Heart right ventricle (tissue), 16 donors: ENCODE measurements at regions of chr1 and their contacts with region 1.

Region 1: GRCh38 chr1:45303582-45304310 is 22.9 kb upstream of the HPDL start:
- DNase-seq: peak; percentile 99
- ATAC-seq: peak; percentile 97 to 98 (median 98)
- H3K4me3 ChIP-seq: peak overlapping the region; percentile 36 to 94 (median 82)
- H3K27ac ChIP-seq: peak overlapping the region; percentile 76 to 96 (median 94)
- H3K4me1 ChIP-seq: peaks cover 0 to 17% (median 10%) of the 10 kb centered on the region in 9 donors
- H3K27me3 ChIP-seq: no peaks in the 10 kb centered on the region
- CTCF ChIP-seq: peak in 8 of 9 donors; percentile 42 to 83 (median 72)

Region 2: GRCh38 chr1:44361478-44361877 is 942.3 kb before region 1 on chr1:
- intact Hi-C with region 1: no loop called
- DNase-seq: no peak
- ATAC-seq: no peak
- H3K4me3 ChIP-seq: no peak overlapping the region
- H3K27ac ChIP-seq: no peak overlapping the region
- H3K4me1 ChIP-seq: no peaks in the 10 kb centered on the region
- H3K27me3 ChIP-seq: peaks cover 0 to 8% (median 0%) of the 10 kb centered on the region in 7 donors
- CTCF ChIP-seq: no peak

Region 3: GRCh38 chr1:44714944-44715571 is 588.7 kb before region 1 on chr1:
- intact Hi-C with region 1: loop called in 1 of 10 experiments (anchors 5 kb)
- DNase-seq: peak in 1 of 2 donors; percentile 64
- ATAC-seq: peak; percentile 64 to 84 (median 72)
- H3K4me3 ChIP-seq: no peak overlapping the region
- H3K27ac ChIP-seq: no peak overlapping the region
- H3K4me1 ChIP-seq: peaks cover 0 to 10% (median 6%) of the 10 kb centered on the region in 9 donors
- H3K27me3 ChIP-seq: peaks cover 0 to 6% (median 0%) of the 10 kb centered on the region in 7 donors
- CTCF ChIP-seq: peak; percentile 82 to 97 (median 92)

Region 4: GRCh38 chr1:44739361-44740178 is 564.2 kb before region 1 on chr1 and contains the start of gene KIF2C:
- intact Hi-C with region 1: loop called in 3 of 10 experiments (anchors 5 to 10 kb)
- DNase-seq: peak; percentile 97
- ATAC-seq: peak; percentile 99 to 100 (median 100)
- H3K4me3 ChIP-seq: peak within 1 kb of the TSS; percentile 31 to 64 (median 52)
- H3K27ac ChIP-seq: peak within 1 kb of the TSS; percentile 34 to 91 (median 82)
- H3K4me1 ChIP-seq: peaks cover 0 to 11% (median 8%) of the 10 kb centered on the region in 9 donors
- H3K27me3 ChIP-seq: no peaks in the 10 kb centered on the region
- CTCF ChIP-seq: peak in 3 of 9 donors; percentile 15 to 31 (median 18)
- total RNA-seq, gene KIF2C: 0.73 to 3.7 (median 1.4) TPM

Region 5: DNA sequence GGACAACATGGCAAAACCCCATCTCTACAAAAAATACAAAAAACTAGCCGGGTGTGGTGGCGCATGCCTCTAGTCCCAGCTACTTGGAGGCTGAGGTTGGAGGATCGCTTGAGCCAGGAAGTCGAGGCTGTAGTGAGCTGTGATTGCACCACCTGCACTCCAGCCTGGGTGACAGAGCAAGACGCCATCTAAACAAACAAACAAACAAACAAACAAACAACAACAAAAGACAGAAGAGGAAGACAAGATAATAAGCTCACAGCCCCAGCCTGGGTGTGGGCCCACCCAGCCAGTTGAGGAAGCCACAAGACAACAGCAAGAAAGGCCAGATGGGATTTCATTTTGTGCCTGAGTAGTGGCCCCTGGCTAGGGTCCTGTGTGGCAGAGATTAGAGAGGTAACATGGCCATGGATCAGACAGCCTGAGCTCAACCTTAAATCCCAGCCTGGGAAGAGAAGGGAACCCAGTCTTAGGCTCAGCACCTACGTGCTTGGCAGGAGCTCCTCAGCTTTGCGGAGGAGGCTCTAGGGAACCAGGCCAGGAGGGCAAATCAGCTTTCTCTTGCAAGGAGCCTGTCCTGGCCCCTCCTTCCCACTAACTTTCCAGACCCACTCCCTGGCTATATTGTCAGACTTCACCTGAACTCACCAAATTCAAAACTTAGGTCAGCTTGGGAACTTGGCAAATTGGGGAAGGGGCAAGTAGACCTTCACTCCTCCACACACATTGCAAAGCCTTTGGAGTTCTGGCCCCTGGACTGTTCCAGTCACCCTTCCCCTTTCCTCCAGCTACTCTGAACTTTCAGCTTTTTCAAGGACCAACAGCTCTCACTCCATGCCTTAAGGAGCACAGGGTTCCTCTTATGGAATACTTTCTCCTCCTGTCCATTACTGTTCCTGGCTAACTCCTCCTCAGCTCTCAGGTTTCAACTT is 510.7 kb before region 1 on chr1:
- intact Hi-C with region 1: loop called in 5 of 10 experiments (anchors 5 to 10 kb)
- DNase-seq: no peak
- ATAC-seq: peak in 3 of 8 donors; percentile 9 to 21 (median 14)
- H3K4me3 ChIP-seq: no peak overlapping the region
- H3K27ac ChIP-seq: no peak overlapping the region
- H3K4me1 ChIP-seq: no peaks in the 10 kb centered on the region
- H3K27me3 ChIP-seq: no peaks in the 10 kb centered on the region
- CTCF ChIP-seq: no peak

Region 6: GRCh38 chr1:44819608-44820327 is 484.0 kb before region 1 on chr1:
- intact Hi-C with region 1: loop called in 1 of 10 experiments (anchors 5 kb)
- DNase-seq: peak; percentile 79 to 84
- ATAC-seq: peak; percentile 88 to 95 (median 92)
- H3K4me3 ChIP-seq: peak overlapping the region; percentile 47 to 76 (median 64)
- H3K27ac ChIP-seq: peak overlapping the region; percentile 85 to 99 (median 96)
- H3K4me1 ChIP-seq: peaks cover 7 to 30% (median 12%) of the 10 kb centered on the region in 9 donors
- H3K27me3 ChIP-seq: no peaks in the 10 kb centered on the region
- CTCF ChIP-seq: peak in 3 of 9 donors; percentile 24 to 35 (median 33)

Region 7: DNA sequence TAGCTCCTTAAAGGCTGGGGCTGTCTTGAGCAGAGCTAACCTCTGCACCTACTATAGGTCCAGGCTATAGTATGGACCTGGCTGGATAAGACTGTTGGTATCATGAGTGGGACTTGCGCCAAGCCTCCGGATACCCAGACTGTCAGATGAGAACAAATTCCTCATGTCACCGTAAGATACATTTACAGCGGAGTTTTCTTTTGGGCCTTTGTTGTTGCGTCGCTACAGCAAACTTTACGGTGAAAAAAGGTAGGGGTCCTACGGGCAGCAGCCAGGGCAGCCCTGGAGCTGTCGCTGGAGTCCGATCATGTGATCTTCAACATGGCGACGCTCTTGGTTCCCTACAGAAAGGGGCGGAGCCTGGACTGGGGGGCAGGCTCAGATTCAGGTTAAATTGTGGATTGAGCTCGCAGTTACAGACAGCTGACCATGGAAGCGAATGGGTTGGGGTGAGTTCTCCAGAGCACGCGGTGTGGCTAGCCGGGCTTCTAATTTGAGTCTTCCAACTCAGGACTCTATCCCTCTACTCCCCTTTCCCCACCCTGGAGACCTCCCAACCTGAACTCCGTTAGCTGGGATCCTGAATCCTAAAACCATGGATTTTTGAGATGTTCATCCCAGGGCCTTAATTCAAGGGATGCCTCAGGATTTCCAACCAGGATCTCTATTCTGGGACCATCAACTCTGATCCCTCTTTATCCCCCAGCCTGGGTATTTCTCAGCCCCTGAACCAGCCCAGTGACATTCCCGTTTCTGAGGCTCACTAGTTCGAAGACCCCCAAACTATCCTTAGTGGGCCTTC is 291.7 kb before region 1 on chr1 and contains the start of gene UROD:
- intact Hi-C with region 1: loop called in 9 of 10 experiments (anchors 1 to 2 kb)
- DNase-seq: peak; percentile 88 to 94
- ATAC-seq: peak; percentile 89 to 97 (median 95)
- H3K4me3 ChIP-seq: peak within 1 kb of the TSS; percentile 75 to 100 (median 96)
- H3K27ac ChIP-seq: peak within 1 kb of the TSS in 9 of 10 donors; percentile 59 to 88 (median 82)
- H3K4me1 ChIP-seq: peaks cover 20 to 51% (median 35%) of the 10 kb centered on the region in 9 donors
- H3K27me3 ChIP-seq: no peaks in the 10 kb centered on the region
- CTCF ChIP-seq: no peak
- total RNA-seq, gene UROD: 68.1 to 94.0 (median 83.1) TPM

Region 8: DNA sequence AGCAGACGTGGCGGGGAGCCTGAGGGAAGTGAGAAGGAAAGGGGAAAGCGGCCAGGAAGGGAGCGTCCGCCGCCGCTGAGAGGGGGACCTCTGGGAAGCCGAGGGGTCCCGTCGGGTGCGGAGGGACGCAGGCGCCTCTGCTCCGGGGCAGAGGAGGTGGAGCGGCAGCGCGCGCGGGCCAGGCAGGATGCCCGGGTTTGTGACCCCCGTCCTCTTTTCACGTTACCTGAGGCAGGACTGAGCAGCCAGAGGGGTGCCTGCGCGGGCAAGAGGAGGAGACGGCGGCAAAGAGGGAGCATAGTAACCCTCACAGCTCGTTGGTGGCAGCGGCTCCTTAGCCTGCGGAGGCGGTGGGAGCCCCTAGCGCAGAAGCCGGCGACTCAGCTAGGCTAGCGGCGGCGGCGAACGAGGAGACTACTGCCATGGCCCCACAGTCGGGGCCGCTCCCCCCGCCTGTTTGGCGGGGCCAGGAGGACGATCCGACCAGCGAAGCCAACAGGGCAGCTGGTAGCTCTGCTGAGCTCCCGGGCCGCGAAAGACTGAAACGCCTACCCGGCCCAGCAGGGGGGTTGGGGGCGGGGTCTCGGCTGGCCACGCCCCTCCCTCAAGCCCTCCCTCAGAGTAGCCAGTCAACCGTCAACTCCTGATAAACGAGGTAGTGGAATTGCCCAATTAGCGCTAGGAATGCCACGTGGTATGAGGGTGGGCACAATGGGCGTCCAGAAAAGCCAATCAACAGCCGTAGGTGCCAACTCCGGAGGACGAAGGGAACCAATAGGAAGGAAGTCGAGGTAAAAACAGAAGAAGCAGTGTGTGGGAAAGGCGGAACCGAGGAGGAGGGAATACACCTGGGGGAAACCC is 187.1 kb after region 1 on chr1 and contains the start of gene TESK2:
- intact Hi-C with region 1: loop called in 3 of 10 experiments (anchors 5 kb)
- DNase-seq: peak; percentile 95 to 97
- ATAC-seq: peak; percentile 97 to 99 (median 98)
- H3K4me3 ChIP-seq: peak within 1 kb of the TSS; percentile 62 to 96 (median 86)
- H3K27ac ChIP-seq: peak within 1 kb of the TSS in 9 of 10 donors; percentile 35 to 83 (median 76)
- H3K4me1 ChIP-seq: peaks cover 0 to 29% (median 10%) of the 10 kb centered on the region in 9 donors
- H3K27me3 ChIP-seq: no peaks in the 10 kb centered on the region
- CTCF ChIP-seq: peak in 4 of 9 donors; percentile 8 to 29 (median 19)
- total RNA-seq, gene TESK2: 0.77 to 2.6 (median 1.3) TPM